ENCODE measurements at regions of chr13 and their contacts with region 1.

Region 1: DNA sequence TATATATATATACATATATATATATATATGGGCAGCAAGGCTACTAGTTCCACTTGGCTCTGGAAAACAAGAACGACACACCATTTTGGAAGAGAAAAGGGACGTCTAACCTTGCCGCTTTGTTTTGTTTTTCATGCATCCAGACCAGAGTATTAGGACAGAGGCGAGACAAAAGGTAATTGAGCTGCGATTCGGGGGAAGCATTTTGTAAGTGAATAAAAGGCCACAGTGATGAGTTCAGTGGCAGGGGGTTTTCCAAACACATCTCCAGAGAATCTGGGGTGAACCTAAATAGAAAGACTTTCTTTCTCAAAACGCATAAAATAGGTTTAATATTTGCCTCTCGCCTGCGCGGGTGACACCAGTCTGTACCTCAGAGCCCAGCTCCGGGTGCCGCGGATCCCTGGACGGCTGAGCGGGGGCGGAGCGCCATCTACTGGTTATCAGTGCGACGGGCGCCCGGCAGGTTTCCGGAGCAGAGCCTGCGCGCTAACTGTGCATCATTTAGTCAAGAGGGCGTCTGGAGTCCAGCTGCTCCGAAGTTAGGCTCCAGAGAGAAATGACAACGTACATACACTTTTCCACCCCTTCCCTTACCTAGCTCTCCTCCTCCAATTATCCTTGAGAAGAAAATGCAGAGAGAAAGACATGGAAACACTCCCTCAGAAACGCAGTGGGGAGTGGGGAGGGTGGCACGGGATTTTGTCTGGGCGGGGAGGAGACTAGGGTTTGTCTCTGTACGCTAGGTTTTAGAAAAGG is 262.3 kb downstream of the TBC1D4 start:
- DNase-seq: peak; percentile 86
- ATAC-seq: peak; percentile 100
- H3K4me3 Mint-ChIP-seq: peak overlapping the region; percentile 54
- H3K27ac Mint-ChIP-seq: no peak overlapping the region
- H3K4me1 Mint-ChIP-seq: peaks cover 7% of the 10 kb centered on the region
- H3K27me3 Mint-ChIP-seq: peaks cover 38% of the 10 kb centered on the region

Region 2: GRCh38 chr13:75365724-75366173 is 146.1 kb after region 1 on chr13:
- CTCF ChIA-PET with region 1: interaction called, 12 read pairs
- POLR2A ChIA-PET with region 1: no interaction called
- DNase-seq: peak; percentile 41
- ATAC-seq: peak; percentile 91
- H3K4me3 Mint-ChIP-seq: peak overlapping the region; percentile 25
- H3K27ac Mint-ChIP-seq: peak overlapping the region; percentile 66
- H3K4me1 Mint-ChIP-seq: peaks cover 27% of the 10 kb centered on the region
- H3K27me3 Mint-ChIP-seq: peaks cover 1% of the 10 kb centered on the region

Measured in activated CD8-positive, alpha-beta T cell treated with anti-CD3 and anti-CD28 coated beads, Interleukin-2, amount 10 ng/mL, durations not matched to agents 7 days and 5 days (primary cell).